ENCODE measurements at regions of chr15 and their contacts with region 1.

Region 1: GRCh38 chr15:66356345-66357236 is at the start of gene TIPIN:
- DNase-seq: peak; percentile 99
- ATAC-seq: peak; percentile 98
- H3K4me3 Mint-ChIP-seq: peak within 1 kb of the TSS; percentile 97
- H3K27ac Mint-ChIP-seq: peak within 1 kb of the TSS; percentile 99
- H3K4me1 Mint-ChIP-seq: peaks cover 24% of the 10 kb centered on the region
- H3K27me3 Mint-ChIP-seq: no peaks in the 10 kb centered on the region
- total RNA-seq, gene TIPIN: 49.9 to 50.8 TPM

Region 2: GRCh38 chr15:65516997-65517865 is 839.4 kb before region 1 on chr15 and contains the start of gene DPP8:
- CTCF ChIA-PET with region 1: no interaction called
- POLR2A ChIA-PET with region 1: no interaction called
- intact Hi-C with region 1: loop called in 1 of 2 experiments (anchors 1 kb)
- DNase-seq: peak; percentile 97
- ATAC-seq: peak; percentile 97
- H3K4me3 Mint-ChIP-seq: peak within 1 kb of the TSS; percentile 91
- H3K27ac Mint-ChIP-seq: peak within 1 kb of the TSS; percentile 88
- H3K4me1 Mint-ChIP-seq: peaks cover 36% of the 10 kb centered on the region
- H3K27me3 Mint-ChIP-seq: no peaks in the 10 kb centered on the region
- total RNA-seq, gene DPP8: 25.8 to 26.4 TPM

Region 3: GRCh38 chr15:66126031-66126441 is 230.6 kb before region 1 on chr15:
- CTCF ChIA-PET with region 1: no interaction called
- POLR2A ChIA-PET with region 1: no interaction called
- intact Hi-C with region 1: no loop called
- DNase-seq: no peak
- ATAC-seq: no peak
- H3K4me3 Mint-ChIP-seq: no peak overlapping the region
- H3K27ac Mint-ChIP-seq: no peak overlapping the region
- H3K4me1 Mint-ChIP-seq: no peaks in the 10 kb centered on the region
- H3K27me3 Mint-ChIP-seq: peaks cover 11% of the 10 kb centered on the region

Region 4: GRCh38 chr15:66293419-66294156 is 63.0 kb before region 1 on chr15 and contains the start of gene DIS3L:
- CTCF ChIA-PET with region 1: interaction called, 3 read pairs
- POLR2A ChIA-PET with region 1: no interaction called
- intact Hi-C with region 1: loop called (anchors 1 to 2 kb)
- DNase-seq: peak; percentile 75
- ATAC-seq: peak; percentile 80
- H3K4me3 Mint-ChIP-seq: peak within 1 kb of the TSS; percentile 86
- H3K27ac Mint-ChIP-seq: peak within 1 kb of the TSS; percentile 90
- H3K4me1 Mint-ChIP-seq: peaks cover 49% of the 10 kb centered on the region
- H3K27me3 Mint-ChIP-seq: no peaks in the 10 kb centered on the region
- total RNA-seq, gene DIS3L: 24.6 to 25.9 TPM

Region 5: GRCh38 chr15:66386204-66387123 is 29.9 kb after region 1 on chr15 and contains the start of gene MAP2K1:
- CTCF ChIA-PET with region 1: interaction called, 3 read pairs
- POLR2A ChIA-PET with region 1: interaction called, 5 read pairs
- intact Hi-C with region 1: loop called (anchors 1 kb)
- DNase-seq: peak; percentile 99
- ATAC-seq: peak; percentile 84
- H3K4me3 Mint-ChIP-seq: peak within 1 kb of the TSS; percentile 95
- H3K27ac Mint-ChIP-seq: peak within 1 kb of the TSS; percentile 100
- H3K4me1 Mint-ChIP-seq: peaks cover 44% of the 10 kb centered on the region
- H3K27me3 Mint-ChIP-seq: no peaks in the 10 kb centered on the region
- total RNA-seq, gene MAP2K1: 94.9 to 115 TPM

Region 6: GRCh38 chr15:66497502-66498455 is 141.2 kb after region 1 on chr15 and contains the start of gene SNAPC5:
- CTCF ChIA-PET with region 1: interaction called, 22 read pairs
- POLR2A ChIA-PET with region 1: interaction called, 5 read pairs
- intact Hi-C with region 1: loop called (anchors 1 kb)
- DNase-seq: peak; percentile 99
- ATAC-seq: peak; percentile 90
- H3K4me3 Mint-ChIP-seq: peak within 1 kb of the TSS; percentile 85
- H3K27ac Mint-ChIP-seq: peak within 1 kb of the TSS; percentile 93
- H3K4me1 Mint-ChIP-seq: peaks cover 56% of the 10 kb centered on the region
- H3K27me3 Mint-ChIP-seq: no peaks in the 10 kb centered on the region
- total RNA-seq, gene SNAPC5: 25.7 to 30.1 TPM

Region 7: DNA sequence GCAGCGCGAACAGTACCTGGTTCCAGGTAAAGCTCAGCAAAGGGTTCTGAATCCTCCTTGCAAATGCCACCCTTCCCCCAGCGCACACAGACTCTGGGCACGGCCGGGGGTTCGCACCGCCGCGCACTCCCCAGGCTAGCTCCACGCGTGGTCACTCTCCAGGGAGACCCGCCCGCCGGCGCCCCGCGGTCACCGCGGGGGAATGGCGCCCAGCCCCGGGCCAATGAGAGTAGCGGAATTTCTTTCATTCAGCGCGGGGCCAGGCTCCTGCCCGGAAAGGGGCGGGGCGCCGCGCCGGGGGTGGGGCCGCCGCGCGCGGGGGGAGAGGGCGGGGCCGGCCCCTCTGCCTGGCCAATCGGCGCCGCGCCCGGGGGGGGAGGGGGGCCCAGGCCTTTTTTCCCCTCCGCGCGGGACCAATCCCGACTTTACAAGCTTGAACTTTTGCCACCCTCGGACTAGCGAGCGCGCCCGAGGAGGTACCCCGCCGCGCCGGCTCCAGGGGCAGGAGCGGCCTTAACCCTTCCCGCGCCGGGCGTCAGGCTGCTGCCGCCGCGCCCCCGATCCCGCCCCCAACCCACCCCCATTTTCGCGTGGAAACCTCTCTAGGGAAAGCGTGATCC is 344.3 kb after region 1 on chr15:
- CTCF ChIA-PET with region 1: no interaction called
- POLR2A ChIA-PET with region 1: no interaction called
- intact Hi-C with region 1: loop called in 1 of 2 experiments (anchors 2 kb)
- DNase-seq: peak; percentile 93
- ATAC-seq: peak; percentile 86
- H3K4me3 Mint-ChIP-seq: peak overlapping the region; percentile 78
- H3K27ac Mint-ChIP-seq: peak overlapping the region; percentile 40
- H3K4me1 Mint-ChIP-seq: peaks cover 14% of the 10 kb centered on the region
- H3K27me3 Mint-ChIP-seq: peaks cover 16% of the 10 kb centered on the region

Region 8: GRCh38 chr15:66805202-66805885 is 448.8 kb after region 1 on chr15:
- CTCF ChIA-PET with region 1: no interaction called
- POLR2A ChIA-PET with region 1: no interaction called
- intact Hi-C with region 1: no loop called
- DNase-seq: no peak
- ATAC-seq: no peak
- H3K4me3 Mint-ChIP-seq: no peak overlapping the region
- H3K27ac Mint-ChIP-seq: no peak overlapping the region
- H3K4me1 Mint-ChIP-seq: no peaks in the 10 kb centered on the region
- H3K27me3 Mint-ChIP-seq: no peaks in the 10 kb centered on the region

Measured in activated CD4-positive, alpha-beta T cell treated with anti-CD3 and anti-CD28 coated beads for 36 hours (primary cell).